ENCODE measurements at regions of chr11 and their contacts with region 1.

Region 1: GRCh38 chr11:126989942-126990715 is 10.4 kb downstream of the KIRREL3 start:
- DNase-seq: peak; percentile 66
- H3K4me3 ChIP-seq: no peak overlapping the region
- H3K27ac ChIP-seq: no peak overlapping the region
- H3K4me1 ChIP-seq: no peaks in the 10 kb centered on the region
- H3K27me3 ChIP-seq: peaks cover 30% of the 10 kb centered on the region
- CTCF ChIP-seq: peak; percentile 82 to 95 (median 92)
- EP300 ChIP-seq: no peak
- POLR2A ChIP-seq: no peak

Region 2: DNA sequence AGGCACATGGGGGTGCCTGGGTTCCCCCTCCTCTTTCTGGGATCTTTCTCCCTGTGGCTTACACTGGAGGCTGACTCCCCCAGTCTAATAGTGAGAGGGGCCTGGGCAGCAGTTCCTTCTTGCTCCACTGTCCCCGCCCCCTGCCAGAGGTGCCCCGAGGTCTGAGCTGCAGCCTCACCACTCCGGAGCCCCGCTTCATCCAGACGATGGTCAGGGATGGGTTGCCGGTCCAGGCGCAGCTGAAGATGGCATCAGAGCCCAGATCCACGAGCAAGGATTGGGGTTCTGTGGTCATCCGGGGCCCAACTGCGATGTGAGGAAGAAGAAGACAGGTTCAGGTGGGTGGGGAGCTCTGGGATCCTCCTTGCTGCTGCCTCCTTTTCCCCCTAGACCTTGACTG is 543.5 kb before region 1 on chr11:
- in situ Hi-C with region 1: loop called in 3 of 4 experiments (anchors 5 to 25 kb)
- intact Hi-C with region 1: loop called (anchors 5 kb)
- DNase-seq: no peak
- H3K4me3 ChIP-seq: no peak overlapping the region
- H3K27ac ChIP-seq: no peak overlapping the region
- H3K4me1 ChIP-seq: no peaks in the 10 kb centered on the region
- H3K27me3 ChIP-seq: peaks cover 18% of the 10 kb centered on the region
- CTCF ChIP-seq: no peak
- EP300 ChIP-seq: no peak
- POLR2A ChIP-seq: no peak

Region 3: GRCh38 chr11:126716456-126717083 is 273.6 kb before region 1 on chr11:
- in situ Hi-C with region 1: loop called (anchors 5 to 25 kb)
- intact Hi-C with region 1: loop called (anchors 10 kb)
- DNase-seq: peak; percentile 55
- H3K4me3 ChIP-seq: no peak overlapping the region
- H3K27ac ChIP-seq: no peak overlapping the region
- H3K4me1 ChIP-seq: no peaks in the 10 kb centered on the region
- H3K27me3 ChIP-seq: peaks cover 9% of the 10 kb centered on the region
- CTCF ChIP-seq: peak; percentile 34 to 58 (median 52)
- EP300 ChIP-seq: no peak
- POLR2A ChIP-seq: no peak

Region 4: GRCh38 chr11:126968915-126969669 is 21.0 kb before region 1 on chr11:
- in situ Hi-C with region 1: no loop called
- intact Hi-C with region 1: no loop called
- DNase-seq: no peak
- H3K4me3 ChIP-seq: no peak overlapping the region
- H3K27ac ChIP-seq: no peak overlapping the region
- H3K4me1 ChIP-seq: peaks cover 0 to 5% (median 2%) of the 10 kb centered on the region in 4 donors
- H3K27me3 ChIP-seq: peaks cover 8% of the 10 kb centered on the region
- CTCF ChIP-seq: no peak
- EP300 ChIP-seq: no peak
- POLR2A ChIP-seq: no peak

Measured in transverse colon (tissue), 4 donors.